ENCODE measurements at regions of chr7 and their contacts with region 1.

Region 1: DNA sequence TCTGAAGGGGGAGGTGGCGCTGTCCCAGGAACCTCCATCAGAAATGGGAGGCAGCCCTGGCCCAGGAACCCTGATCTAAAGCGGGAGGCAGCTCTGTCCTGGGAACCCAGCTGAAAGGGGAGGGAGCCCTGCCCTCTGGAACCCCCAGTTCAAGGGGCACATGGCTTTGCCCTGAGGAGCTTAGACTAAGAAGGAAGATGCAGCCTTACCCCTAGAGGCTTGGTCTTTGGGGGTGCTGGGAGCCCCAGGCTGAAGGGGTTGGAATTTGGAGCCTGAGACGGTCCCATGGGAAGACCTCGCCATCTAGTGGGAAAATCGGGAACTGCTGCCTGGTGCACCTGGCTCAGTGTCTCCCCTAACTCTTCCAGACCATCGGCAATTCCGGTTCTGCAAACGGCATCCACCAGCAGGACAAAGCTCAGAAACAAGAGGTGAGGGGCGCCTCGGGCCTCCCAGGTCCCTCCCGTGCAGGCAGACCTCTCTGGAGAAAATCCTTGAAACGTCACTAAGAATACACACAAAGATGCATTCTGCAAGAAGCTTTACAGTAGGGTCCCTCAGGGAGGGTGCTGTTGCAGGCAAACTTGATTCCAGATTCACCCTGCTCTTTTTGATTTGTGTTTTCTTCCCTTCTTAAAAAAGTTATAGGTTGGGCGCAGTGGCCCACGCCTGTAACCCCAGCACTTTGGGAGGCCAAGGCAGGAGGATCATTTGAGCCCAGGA is 52.4 kb upstream of the GTF2IRD1 start:
- DNase-seq: peak; percentile 82
- ATAC-seq: peak; percentile 78
- H3K4me3 ChIP-seq: no peak overlapping the region
- H3K4me3 Mint-ChIP-seq: no peak overlapping the region
- H3K27ac ChIP-seq: no peak overlapping the region
- H3K27ac Mint-ChIP-seq: no peak overlapping the region
- H3K4me1 ChIP-seq: no peaks in the 10 kb centered on the region
- H3K4me1 Mint-ChIP-seq: no peaks in the 10 kb centered on the region
- H3K27me3 ChIP-seq: no peaks in the 10 kb centered on the region
- H3K27me3 Mint-ChIP-seq: no peaks in the 10 kb centered on the region
- CTCF ChIP-seq: peak; percentile 89

Region 2: DNA sequence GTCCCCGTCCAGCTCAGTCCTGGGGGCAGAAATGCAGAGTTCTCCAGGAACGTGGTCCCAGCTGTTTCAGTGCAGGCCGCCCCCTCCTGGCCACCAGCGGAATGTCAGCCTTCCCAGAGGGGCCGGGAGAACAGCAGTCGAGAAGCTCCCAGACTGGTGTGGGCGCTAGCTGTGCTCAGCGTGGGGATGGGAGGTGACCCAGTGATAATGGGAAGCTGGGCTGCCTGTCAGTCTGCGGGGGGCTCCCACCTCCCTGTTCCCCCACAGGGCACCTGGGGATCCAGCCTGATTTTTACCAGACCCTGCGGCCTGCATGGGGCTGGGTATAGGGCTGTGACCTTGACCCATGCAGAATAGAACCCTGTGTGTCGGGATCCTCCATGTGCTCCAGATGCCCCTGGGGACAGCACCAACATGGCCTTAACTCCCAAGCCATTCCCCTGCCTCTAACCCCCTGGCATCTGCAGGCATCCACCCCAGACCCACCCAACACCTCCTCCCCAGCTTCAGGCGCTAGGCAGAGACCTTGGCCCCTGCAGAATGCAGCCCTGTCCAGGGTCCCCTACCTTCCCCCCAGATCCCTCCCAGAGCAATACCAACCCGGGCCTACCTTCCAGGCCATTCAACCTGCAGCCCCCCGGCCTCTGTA is 374.3 kb before region 1 on chr7:
- CTCF ChIA-PET with region 1: interaction called, 13 read pairs
- POLR2A ChIA-PET with region 1: no interaction called
- intact Hi-C with region 1: no loop called
- DNase-seq: peak; percentile 69
- ATAC-seq: peak; percentile 78
- H3K4me3 ChIP-seq: no peak overlapping the region
- H3K4me3 Mint-ChIP-seq: no peak overlapping the region
- H3K27ac ChIP-seq: no peak overlapping the region
- H3K27ac Mint-ChIP-seq: no peak overlapping the region
- H3K4me1 ChIP-seq: peaks cover 11 to 13% of the 10 kb centered on the region in 2 donors
- H3K4me1 Mint-ChIP-seq: peaks cover 7% of the 10 kb centered on the region
- H3K27me3 ChIP-seq: peaks cover 0 to 62% (median 23%) of the 10 kb centered on the region in 4 experiments
- H3K27me3 Mint-ChIP-seq: peaks cover 53% of the 10 kb centered on the region
- CTCF ChIP-seq: peak; percentile 93

Region 3: GRCh38 chr7:74183613-74184450 is 217.5 kb before region 1 on chr7:
- CTCF ChIA-PET with region 1: interaction called, 11 read pairs
- POLR2A ChIA-PET with region 1: no interaction called
- intact Hi-C with region 1: no loop called
- DNase-seq: peak; percentile 46
- ATAC-seq: peak; percentile 56
- H3K4me3 ChIP-seq: no peak overlapping the region
- H3K4me3 Mint-ChIP-seq: peak overlapping the region; percentile 8
- H3K27ac ChIP-seq: peak overlapping the region in 1 of 2 donors; percentile 66
- H3K27ac Mint-ChIP-seq: peak overlapping the region; percentile 65
- H3K4me1 ChIP-seq: peaks cover 50 to 69% of the 10 kb centered on the region in 2 donors
- H3K4me1 Mint-ChIP-seq: peaks cover 78% of the 10 kb centered on the region
- H3K27me3 ChIP-seq: no peaks in the 10 kb centered on the region
- H3K27me3 Mint-ChIP-seq: no peaks in the 10 kb centered on the region
- CTCF ChIP-seq: peak; percentile 50

Region 4: GRCh38 chr7:74272305-74273038 is 128.8 kb before region 1 on chr7:
- CTCF ChIA-PET with region 1: interaction called, 13 read pairs
- POLR2A ChIA-PET with region 1: no interaction called
- intact Hi-C with region 1: no loop called
- DNase-seq: peak; percentile 65
- ATAC-seq: peak; percentile 70
- H3K4me3 ChIP-seq: peak overlapping the region in 2 of 5 experiments; percentile 5 to 18
- H3K4me3 Mint-ChIP-seq: peak overlapping the region; percentile 85
- H3K27ac ChIP-seq: no peak overlapping the region
- H3K27ac Mint-ChIP-seq: peak overlapping the region; percentile 87
- H3K4me1 ChIP-seq: peaks cover 16 to 44% of the 10 kb centered on the region in 2 donors
- H3K4me1 Mint-ChIP-seq: peaks cover 39% of the 10 kb centered on the region
- H3K27me3 ChIP-seq: no peaks in the 10 kb centered on the region
- H3K27me3 Mint-ChIP-seq: no peaks in the 10 kb centered on the region
- CTCF ChIP-seq: no peak

Region 5: DNA sequence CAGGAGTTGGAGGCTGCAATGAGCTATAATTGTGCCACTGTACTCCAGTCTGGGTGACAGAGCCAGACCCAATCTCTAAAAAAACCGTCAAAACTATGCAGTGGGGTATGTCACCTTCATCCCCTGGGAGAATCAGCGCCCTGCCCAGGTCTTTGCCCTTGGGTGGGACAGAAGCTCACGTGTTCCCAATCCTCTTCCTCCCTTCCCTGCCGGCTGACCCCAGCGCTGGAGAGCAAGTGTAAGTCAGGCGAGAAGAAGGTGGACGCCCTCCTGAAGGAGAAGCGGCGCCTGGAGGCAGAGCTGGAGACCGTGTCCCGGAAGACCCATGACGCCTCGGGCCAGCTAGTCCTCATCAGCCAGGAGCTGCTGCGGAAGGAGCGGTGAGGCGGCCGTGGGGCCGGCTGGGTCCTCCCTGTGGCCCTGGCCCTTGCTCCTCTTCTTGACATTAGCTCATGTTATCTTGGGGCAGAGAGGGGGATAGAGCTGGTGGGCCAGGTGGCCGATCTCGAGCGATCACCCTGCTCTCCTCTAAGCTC is 12.3 kb before region 1 on chr7:
- CTCF ChIA-PET with region 1: interaction called, 25 read pairs
- POLR2A ChIA-PET with region 1: no interaction called
- intact Hi-C with region 1: no loop called
- DNase-seq: no peak
- ATAC-seq: no peak
- H3K4me3 ChIP-seq: no peak overlapping the region
- H3K4me3 Mint-ChIP-seq: no peak overlapping the region
- H3K27ac ChIP-seq: no peak overlapping the region
- H3K27ac Mint-ChIP-seq: no peak overlapping the region
- H3K4me1 ChIP-seq: no peaks in the 10 kb centered on the region
- H3K4me1 Mint-ChIP-seq: no peaks in the 10 kb centered on the region
- H3K27me3 ChIP-seq: no peaks in the 10 kb centered on the region
- H3K27me3 Mint-ChIP-seq: no peaks in the 10 kb centered on the region
- CTCF ChIP-seq: no peak

Measured in B cell (primary cell).